Caco-2 (cell line): ENCODE measurements at regions of chr1 and their contacts with region 1.

Region 1: GRCh38 chr1:98556521-98557158 is 104.9 kb upstream of the SNX7 start:
- DNase-seq: no peak
- H3K4me3 ChIP-seq: no peak overlapping the region
- H3K4me3 Mint-ChIP-seq: no peak overlapping the region
- H3K27ac Mint-ChIP-seq: no peak overlapping the region
- H3K4me1 ChIP-seq: no peaks in the 10 kb centered on the region
- H3K4me1 Mint-ChIP-seq: no peaks in the 10 kb centered on the region
- H3K27me3 ChIP-seq: no peaks in the 10 kb centered on the region
- H3K27me3 Mint-ChIP-seq: peaks cover 3% of the 10 kb centered on the region
- CTCF ChIP-seq: peak in 1 of 2 experiments; percentile 27

Region 2: GRCh38 chr1:98732985-98733781 is 176.5 kb after region 1 on chr1:
- CTCF ChIA-PET with region 1: no interaction called
- POLR2A ChIA-PET with region 1: no interaction called
- intact Hi-C with region 1: loop called (anchors 10 kb)
- DNase-seq: no peak
- H3K4me3 ChIP-seq: no peak overlapping the region
- H3K4me3 Mint-ChIP-seq: peak overlapping the region; percentile 44
- H3K27ac Mint-ChIP-seq: peak overlapping the region; percentile 68
- H3K4me1 ChIP-seq: peaks cover 25% of the 10 kb centered on the region
- H3K4me1 Mint-ChIP-seq: peaks cover 23% of the 10 kb centered on the region
- H3K27me3 ChIP-seq: no peaks in the 10 kb centered on the region
- H3K27me3 Mint-ChIP-seq: no peaks in the 10 kb centered on the region
- CTCF ChIP-seq: no peak

Region 3: DNA sequence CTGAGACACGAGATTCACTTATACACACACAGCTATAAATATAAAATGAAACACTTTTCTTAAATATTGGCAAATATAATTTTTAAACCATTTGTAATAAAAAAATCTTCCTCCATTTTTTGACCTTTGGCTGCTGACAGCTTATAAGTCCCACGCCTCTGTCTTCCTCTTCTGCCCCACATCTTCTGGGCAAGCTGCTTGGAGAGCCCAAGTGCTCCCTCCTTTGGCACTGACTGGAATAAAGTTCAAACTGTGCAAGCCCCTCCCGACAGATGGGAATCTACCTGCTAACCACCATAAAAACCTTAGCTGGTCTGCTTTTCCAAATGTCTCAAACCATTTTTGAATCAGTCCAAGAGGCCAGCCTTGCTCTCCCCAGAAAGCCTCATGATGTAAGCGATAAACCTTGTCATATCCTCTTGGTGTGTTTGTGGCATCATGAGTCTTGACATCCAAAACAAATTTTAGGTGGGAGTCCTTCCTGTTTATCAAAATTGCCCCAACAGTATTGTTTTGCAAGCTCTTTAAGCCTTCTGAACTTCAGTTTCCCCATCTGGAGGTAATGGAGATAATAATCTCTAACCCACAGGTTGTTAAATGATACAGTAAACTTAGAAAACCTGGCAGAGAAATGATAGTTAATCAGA is 204.7 kb after region 1 on chr1:
- CTCF ChIA-PET with region 1: no interaction called
- POLR2A ChIA-PET with region 1: no interaction called
- intact Hi-C with region 1: loop called (anchors 1 kb)
- DNase-seq: peak; percentile 19 to 33
- H3K4me3 ChIP-seq: no peak overlapping the region
- H3K4me3 Mint-ChIP-seq: no peak overlapping the region
- H3K27ac Mint-ChIP-seq: no peak overlapping the region
- H3K4me1 ChIP-seq: no peaks in the 10 kb centered on the region
- H3K4me1 Mint-ChIP-seq: no peaks in the 10 kb centered on the region
- H3K27me3 ChIP-seq: no peaks in the 10 kb centered on the region
- H3K27me3 Mint-ChIP-seq: no peaks in the 10 kb centered on the region
- CTCF ChIP-seq: peak in 1 of 2 experiments; percentile 12